ENCODE measurements at regions of chr19 and their contacts with region 1.

Region 1: GRCh38 chr19:4791170-4792018 is at the start of gene FEM1A:
- DNase-seq: peak; percentile 97
- ATAC-seq: peak; percentile 95
- H3K4me3 Mint-ChIP-seq: peak within 1 kb of the TSS; percentile 79
- H3K27ac Mint-ChIP-seq: peak within 1 kb of the TSS; percentile 82
- H3K4me1 Mint-ChIP-seq: peaks cover 33% of the 10 kb centered on the region
- H3K27me3 Mint-ChIP-seq: peaks cover 2% of the 10 kb centered on the region
- CTCF ChIP-seq: peak; percentile 84
- total RNA-seq, gene FEM1A: 16.7 and 17.9 TPM in 2 replicates

Region 2: DNA sequence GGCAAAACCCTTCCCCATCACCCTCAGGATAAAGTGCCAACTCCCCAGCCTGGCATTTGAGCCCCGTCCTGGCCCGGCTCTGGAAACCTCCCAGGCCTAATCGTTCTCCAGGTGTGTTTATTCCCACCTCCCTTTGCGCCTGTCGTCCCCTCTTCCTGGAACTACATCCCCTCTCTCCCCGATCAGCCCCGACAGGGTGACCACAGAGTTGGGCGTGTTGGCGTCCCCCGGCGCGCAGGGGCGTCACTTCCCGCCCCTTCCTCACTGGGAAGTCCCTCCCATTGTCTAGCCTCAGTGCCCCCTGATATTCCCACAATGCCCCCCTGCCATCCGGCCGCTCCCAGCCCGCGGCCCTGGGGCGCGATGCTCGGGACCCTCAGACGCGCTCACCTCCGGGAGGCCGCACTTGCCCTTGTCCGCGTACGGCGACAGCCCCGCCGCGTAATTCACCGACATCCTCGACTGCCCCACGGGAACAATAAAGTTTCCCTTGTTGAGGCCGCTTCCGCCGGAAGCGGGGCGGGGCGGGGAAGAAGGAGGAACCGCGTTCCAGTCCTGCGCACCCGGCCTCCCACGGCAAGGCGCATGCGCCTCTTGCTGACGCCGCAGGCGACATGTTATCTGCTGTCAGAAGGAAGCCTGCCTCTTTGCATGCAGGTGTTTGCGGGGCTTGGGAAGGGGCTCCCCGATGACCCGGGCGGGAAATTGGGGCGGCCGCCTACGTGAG is 609.1 kb before region 1 on chr19 and contains the starts of genes ANKRD24 and SIRT6:
- CTCF ChIA-PET with region 1: no interaction called
- POLR2A ChIA-PET with region 1: no interaction called
- intact Hi-C with region 1: loop called (anchors 5 kb)
- DNase-seq: peak; percentile 96
- ATAC-seq: peak; percentile 84
- H3K4me3 Mint-ChIP-seq: peak within 1 kb of the TSS; percentile 97
- H3K27ac Mint-ChIP-seq: peak within 1 kb of the TSS; percentile 94
- H3K4me1 Mint-ChIP-seq: peaks cover 35% of the 10 kb centered on the region
- H3K27me3 Mint-ChIP-seq: no peaks in the 10 kb centered on the region
- CTCF ChIP-seq: no peak
- total RNA-seq, gene ANKRD24: 0.42 and 0.49 TPM in 2 replicates
- total RNA-seq, gene SIRT6: 34.1 and 36.8 TPM in 2 replicates

Region 3: DNA sequence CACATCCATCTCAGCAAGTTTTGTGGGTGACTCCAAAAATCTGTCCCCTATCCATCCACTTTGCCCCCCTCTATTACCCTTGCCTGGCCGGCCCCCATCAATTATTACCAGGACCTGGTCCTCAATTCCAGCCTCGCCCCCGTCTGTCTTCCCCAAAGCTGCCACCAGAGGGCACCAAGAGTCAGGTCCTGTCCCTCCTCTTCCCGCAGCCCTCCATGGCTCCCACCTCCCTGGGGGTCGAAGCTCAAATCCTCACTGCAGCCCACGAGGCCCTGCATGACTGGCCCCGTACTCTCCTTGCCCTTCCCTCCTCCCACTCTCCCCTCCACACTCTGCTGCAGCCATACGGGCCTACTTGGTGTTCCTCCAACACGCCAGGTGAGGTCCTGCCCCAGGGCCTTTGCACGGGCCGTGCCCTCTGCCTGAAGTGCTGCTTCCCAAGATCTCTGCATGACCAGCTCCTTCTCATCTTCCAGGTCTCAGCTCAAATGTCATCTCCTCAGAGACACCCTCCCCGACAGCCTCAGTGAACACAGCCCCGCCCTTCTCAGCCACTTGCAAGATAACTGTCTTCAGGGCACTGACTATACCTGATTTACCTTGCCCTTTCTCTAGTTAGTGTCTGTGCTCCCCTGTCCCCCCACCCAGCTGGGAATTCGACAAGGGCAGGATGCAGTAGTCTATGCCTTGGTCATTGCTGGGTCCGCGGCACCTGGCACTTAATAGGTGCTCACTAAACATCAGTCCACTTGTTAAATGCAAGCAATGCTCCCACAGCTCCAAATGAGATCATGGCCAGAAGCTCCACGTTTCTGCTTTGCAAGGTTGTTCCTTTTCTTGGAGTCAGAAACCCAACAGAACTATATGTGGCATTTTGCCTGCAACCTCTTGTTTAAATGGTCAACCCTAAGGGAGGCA is 215.1 kb before region 1 on chr19:
- CTCF ChIA-PET with region 1: interaction called, 10 read pairs
- POLR2A ChIA-PET with region 1: no interaction called
- intact Hi-C with region 1: loop called (anchors 1 kb)
- DNase-seq: peak; percentile 64
- ATAC-seq: peak; percentile 60
- H3K4me3 Mint-ChIP-seq: no peak overlapping the region
- H3K27ac Mint-ChIP-seq: no peak overlapping the region
- H3K4me1 Mint-ChIP-seq: peaks cover 3% of the 10 kb centered on the region
- H3K27me3 Mint-ChIP-seq: peaks cover 48% of the 10 kb centered on the region
- CTCF ChIP-seq: no peak

Region 4: DNA sequence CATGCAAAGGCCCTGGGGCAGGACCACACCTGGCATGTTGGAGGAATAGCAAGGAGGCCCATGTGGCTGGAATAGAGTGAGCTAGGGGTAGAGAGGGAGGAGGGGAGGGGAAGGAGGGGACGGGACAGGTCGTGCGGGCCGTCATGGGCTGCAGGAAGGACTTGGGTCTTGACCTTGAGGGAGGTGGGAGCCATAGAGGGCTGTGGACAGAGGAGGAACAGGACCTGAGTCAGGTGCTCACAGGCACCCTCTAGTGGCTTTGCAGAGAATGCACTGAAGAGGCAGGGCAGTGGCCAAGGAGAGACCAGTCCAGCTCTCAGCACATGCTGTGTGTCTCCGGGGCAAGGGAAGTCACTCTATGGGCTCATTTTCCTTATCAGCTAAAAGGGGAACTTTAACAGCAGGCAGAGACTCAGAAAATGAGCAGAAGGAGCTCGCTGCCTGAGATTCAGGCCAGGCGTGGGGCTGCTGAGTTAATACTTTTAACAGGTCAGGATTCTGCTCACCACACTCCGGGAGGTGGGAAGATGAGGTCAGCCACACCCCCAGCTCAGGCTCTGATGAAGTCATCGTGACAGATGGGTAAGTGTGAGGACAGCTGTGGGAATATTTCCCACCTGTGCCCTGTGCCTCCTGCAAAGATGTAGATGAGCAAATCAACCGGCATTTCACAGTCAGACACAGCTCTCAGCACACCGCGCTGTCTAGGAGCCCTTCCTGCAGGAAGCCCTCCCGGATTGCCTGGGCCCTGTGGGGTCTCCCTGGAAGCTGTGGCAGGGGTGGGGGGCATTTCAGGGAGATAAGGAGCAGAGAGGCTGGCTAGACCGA is 158.0 kb before region 1 on chr19:
- CTCF ChIA-PET with region 1: no interaction called
- POLR2A ChIA-PET with region 1: no interaction called
- intact Hi-C with region 1: no loop called
- DNase-seq: peak; percentile 32
- ATAC-seq: peak; percentile 66
- H3K4me3 Mint-ChIP-seq: no peak overlapping the region
- H3K27ac Mint-ChIP-seq: peak overlapping the region; percentile 16
- H3K4me1 Mint-ChIP-seq: peaks cover 18% of the 10 kb centered on the region
- H3K27me3 Mint-ChIP-seq: peaks cover 5% of the 10 kb centered on the region
- CTCF ChIP-seq: no peak

Region 5: DNA sequence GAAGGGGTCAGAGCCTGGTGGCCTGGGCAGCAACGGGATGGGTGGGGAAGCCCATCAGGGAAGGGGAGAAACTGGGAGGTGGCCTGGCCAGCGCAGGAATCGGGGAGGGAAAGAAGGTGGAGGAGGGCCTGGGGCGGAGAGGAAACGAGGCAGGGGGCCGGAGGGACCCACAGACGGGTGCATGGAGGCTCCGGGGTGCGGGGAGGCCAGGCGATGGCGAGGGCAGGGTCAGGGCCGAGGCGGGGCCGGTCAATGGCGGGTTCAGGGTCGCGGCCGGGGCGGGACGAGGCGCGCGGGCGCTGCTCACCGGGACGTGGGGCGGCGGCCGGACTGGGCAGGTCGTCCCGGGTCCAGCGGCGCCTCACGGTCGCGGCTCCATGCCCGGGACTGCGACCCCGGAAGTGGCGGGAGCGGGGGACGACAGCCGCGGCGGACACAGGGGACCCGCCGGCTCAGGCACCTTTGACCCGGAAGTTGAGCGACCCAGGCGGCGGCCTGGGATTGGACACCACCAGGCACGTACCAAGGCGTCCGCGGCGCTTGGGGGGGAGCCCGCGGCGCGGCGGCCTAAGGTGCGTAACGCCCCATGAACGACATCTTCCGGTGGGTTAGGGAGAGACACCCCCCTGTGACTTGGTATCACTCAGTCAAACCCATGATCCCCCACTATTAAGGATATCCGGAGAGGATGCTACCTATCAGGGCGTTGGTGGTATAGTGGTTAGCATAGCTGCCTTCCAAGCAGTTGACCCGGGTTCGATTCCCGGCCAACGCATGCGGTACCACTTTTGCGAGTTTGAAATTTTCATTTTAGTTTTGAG is 67.8 kb before region 1 on chr19 and contains the start of gene DPP9:
- CTCF ChIA-PET with region 1: interaction called, 14 read pairs
- POLR2A ChIA-PET with region 1: interaction called, 46 read pairs
- intact Hi-C with region 1: loop called (anchors 1 kb)
- DNase-seq: peak; percentile 92
- ATAC-seq: peak; percentile 94
- H3K4me3 Mint-ChIP-seq: peak within 1 kb of the TSS; percentile 98
- H3K27ac Mint-ChIP-seq: peak within 1 kb of the TSS; percentile 98
- H3K4me1 Mint-ChIP-seq: peaks cover 46% of the 10 kb centered on the region
- H3K27me3 Mint-ChIP-seq: peaks cover 7% of the 10 kb centered on the region
- CTCF ChIP-seq: no peak
- total RNA-seq, gene DPP9: 85.7 and 111 TPM in 2 replicates

Region 6: GRCh38 chr19:4803736-4804695 is 12.6 kb after region 1 on chr19:
- CTCF ChIA-PET with region 1: interaction called, 18 read pairs
- POLR2A ChIA-PET with region 1: interaction called, 3 read pairs
- intact Hi-C with region 1: no loop called
- DNase-seq: peak; percentile 55
- ATAC-seq: peak; percentile 94
- H3K4me3 Mint-ChIP-seq: no peak overlapping the region
- H3K27ac Mint-ChIP-seq: no peak overlapping the region
- H3K4me1 Mint-ChIP-seq: peaks cover 15% of the 10 kb centered on the region
- H3K27me3 Mint-ChIP-seq: no peaks in the 10 kb centered on the region
- CTCF ChIP-seq: peak; percentile 52

Region 7: GRCh38 chr19:4916292-4917082 is 125.1 kb after region 1 on chr19:
- CTCF ChIA-PET with region 1: interaction called, 3 read pairs
- POLR2A ChIA-PET with region 1: interaction called, 10 read pairs
- intact Hi-C with region 1: no loop called
- DNase-seq: peak; percentile 55
- ATAC-seq: peak; percentile 75
- H3K4me3 Mint-ChIP-seq: peak overlapping the region; percentile 98
- H3K27ac Mint-ChIP-seq: peak overlapping the region; percentile 93
- H3K4me1 Mint-ChIP-seq: peaks cover 54% of the 10 kb centered on the region
- H3K27me3 Mint-ChIP-seq: no peaks in the 10 kb centered on the region
- CTCF ChIP-seq: no peak

Region 8: DNA sequence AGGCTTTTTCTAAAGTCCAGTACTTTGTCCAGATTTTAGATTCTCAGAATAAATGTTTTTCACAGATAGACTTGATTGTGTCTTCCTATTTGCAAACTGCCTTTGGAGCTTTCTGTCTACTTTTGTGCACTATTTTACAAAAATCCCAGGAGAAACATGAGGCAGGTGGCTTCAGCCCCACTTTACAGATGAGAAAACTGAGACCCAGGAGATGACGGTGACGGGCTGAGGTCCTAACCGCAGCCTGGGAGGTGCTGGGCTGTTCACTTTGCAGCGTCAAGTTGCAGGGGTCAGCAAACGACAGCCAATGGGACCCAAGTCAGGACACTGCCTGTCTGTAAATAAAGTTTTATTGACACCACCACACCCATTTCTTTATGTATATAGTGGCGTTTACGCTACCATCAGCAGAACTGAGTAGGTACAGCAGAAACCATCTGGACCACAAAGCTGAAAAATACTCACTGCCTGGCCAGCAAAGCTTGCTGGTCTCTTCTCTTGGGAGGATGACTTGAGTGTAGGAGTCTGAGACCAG is 170.8 kb after region 1 on chr19:
- CTCF ChIA-PET with region 1: no interaction called
- POLR2A ChIA-PET with region 1: no interaction called
- intact Hi-C with region 1: no loop called
- DNase-seq: no peak
- ATAC-seq: no peak
- H3K4me3 Mint-ChIP-seq: no peak overlapping the region
- H3K27ac Mint-ChIP-seq: no peak overlapping the region
- H3K4me1 Mint-ChIP-seq: peaks cover 2% of the 10 kb centered on the region
- H3K27me3 Mint-ChIP-seq: no peaks in the 10 kb centered on the region
- CTCF ChIP-seq: no peak

Region 9: GRCh38 chr19:5281588-5281987 is 490.2 kb after region 1 on chr19:
- CTCF ChIA-PET with region 1: no interaction called
- POLR2A ChIA-PET with region 1: no interaction called
- intact Hi-C with region 1: no loop called
- DNase-seq: no peak
- ATAC-seq: no peak
- H3K4me3 Mint-ChIP-seq: no peak overlapping the region
- H3K27ac Mint-ChIP-seq: no peak overlapping the region
- H3K4me1 Mint-ChIP-seq: peaks cover 10% of the 10 kb centered on the region
- H3K27me3 Mint-ChIP-seq: no peaks in the 10 kb centered on the region
- CTCF ChIP-seq: no peak

Region 10: DNA sequence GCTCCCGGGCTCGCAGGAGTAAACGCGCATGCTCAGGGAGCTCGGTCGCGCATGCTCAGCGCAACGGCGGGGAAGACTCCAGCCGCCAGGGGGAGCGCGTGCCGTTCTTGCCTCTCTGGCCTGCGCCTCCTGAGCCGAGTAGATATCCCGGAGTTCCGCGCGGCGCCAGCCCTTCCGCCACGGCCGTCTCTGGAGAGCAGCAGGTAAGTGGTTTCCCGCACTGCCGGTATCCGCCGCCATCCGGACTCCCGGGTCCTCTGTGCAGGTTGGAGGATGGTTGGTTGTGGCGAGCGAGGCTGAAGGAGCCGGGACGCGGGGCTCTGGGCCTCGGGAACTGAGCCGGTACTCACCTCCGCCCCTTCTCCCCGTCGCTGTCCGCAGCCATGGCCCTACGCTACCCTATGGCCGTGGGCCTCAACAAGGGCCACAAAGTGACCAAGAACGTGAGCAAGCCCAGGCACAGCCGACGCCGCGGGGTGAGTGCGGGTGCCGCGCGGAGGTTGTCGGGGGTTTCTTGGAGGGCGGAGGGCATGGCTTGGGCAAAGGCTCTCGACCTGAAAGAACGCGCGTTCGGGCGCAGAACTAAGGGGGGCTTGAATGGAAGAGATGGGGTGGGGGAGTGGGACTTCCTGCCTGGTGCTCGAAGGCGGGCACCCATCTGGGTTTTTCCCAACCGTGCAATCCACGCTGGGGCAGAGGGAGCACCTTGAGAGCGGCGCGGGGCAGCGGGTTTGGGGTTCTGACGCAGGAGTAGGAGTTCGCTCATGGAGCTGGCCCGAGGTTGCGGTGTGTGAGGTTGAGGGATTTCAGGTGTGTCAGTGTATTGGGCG is 898.9 kb after region 1 on chr19 and contains the start of gene RPL36:
- CTCF ChIA-PET with region 1: no interaction called
- POLR2A ChIA-PET with region 1: interaction called, 7 read pairs
- intact Hi-C with region 1: loop called (anchors 2 kb)
- DNase-seq: peak; percentile 99
- ATAC-seq: peak; percentile 48
- H3K4me3 Mint-ChIP-seq: peak within 1 kb of the TSS; percentile 93
- H3K27ac Mint-ChIP-seq: peak within 1 kb of the TSS; percentile 90
- H3K4me1 Mint-ChIP-seq: peaks cover 33% of the 10 kb centered on the region
- H3K27me3 Mint-ChIP-seq: no peaks in the 10 kb centered on the region
- CTCF ChIP-seq: peak; percentile 88
- total RNA-seq, gene RPL36: 1,170 and 1,330 TPM in 2 replicates